ENCODE measurements at regions of chr1 and their contacts with region 1.

Region 1: GRCh38 chr1:24201941-24202440 is 14.9 kb upstream of the IFNLR1 start:
- DNase-seq: peak; percentile 98
- H3K4me3 Mint-ChIP-seq: no peak overlapping the region
- H3K27ac Mint-ChIP-seq: no peak overlapping the region
- H3K4me1 Mint-ChIP-seq: peaks cover 21% of the 10 kb centered on the region
- H3K27me3 Mint-ChIP-seq: no peaks in the 10 kb centered on the region
- CTCF ChIP-seq: peak; percentile 89

Region 2: GRCh38 chr1:23591460-23592208 is 610.4 kb before region 1 on chr1:
- CTCF ChIA-PET with region 1: no interaction called
- POLR2A ChIA-PET with region 1: no interaction called
- intact Hi-C with region 1: no loop called
- DNase-seq: no peak
- H3K4me3 Mint-ChIP-seq: no peak overlapping the region
- H3K27ac Mint-ChIP-seq: peak overlapping the region; percentile 94
- H3K4me1 Mint-ChIP-seq: peaks cover 74% of the 10 kb centered on the region
- H3K27me3 Mint-ChIP-seq: no peaks in the 10 kb centered on the region
- CTCF ChIP-seq: no peak

Region 3: GRCh38 chr1:24070821-24071393 is 131.1 kb before region 1 on chr1:
- CTCF ChIA-PET with region 1: interaction called, 21 read pairs
- POLR2A ChIA-PET with region 1: no interaction called
- intact Hi-C with region 1: loop called (anchors 2 kb)
- DNase-seq: peak; percentile 84
- H3K4me3 Mint-ChIP-seq: no peak overlapping the region
- H3K27ac Mint-ChIP-seq: no peak overlapping the region
- H3K4me1 Mint-ChIP-seq: peaks cover 3% of the 10 kb centered on the region
- H3K27me3 Mint-ChIP-seq: no peaks in the 10 kb centered on the region
- CTCF ChIP-seq: peak; percentile 88

Region 4: GRCh38 chr1:24186993-24187805 is 14.8 kb before region 1 on chr1 and contains the start of gene IFNLR1:
- CTCF ChIA-PET with region 1: interaction called, 35 read pairs
- POLR2A ChIA-PET with region 1: no interaction called
- intact Hi-C with region 1: no loop called
- DNase-seq: no peak
- H3K4me3 Mint-ChIP-seq: peak within 1 kb of the TSS; percentile 51
- H3K27ac Mint-ChIP-seq: no peak within 1 kb of the TSS
- H3K4me1 Mint-ChIP-seq: peaks cover 19% of the 10 kb centered on the region
- H3K27me3 Mint-ChIP-seq: no peaks in the 10 kb centered on the region
- CTCF ChIP-seq: no peak
- total RNA-seq, gene IFNLR1: 0.12 and 0.19 TPM in 2 replicates

Region 5: DNA sequence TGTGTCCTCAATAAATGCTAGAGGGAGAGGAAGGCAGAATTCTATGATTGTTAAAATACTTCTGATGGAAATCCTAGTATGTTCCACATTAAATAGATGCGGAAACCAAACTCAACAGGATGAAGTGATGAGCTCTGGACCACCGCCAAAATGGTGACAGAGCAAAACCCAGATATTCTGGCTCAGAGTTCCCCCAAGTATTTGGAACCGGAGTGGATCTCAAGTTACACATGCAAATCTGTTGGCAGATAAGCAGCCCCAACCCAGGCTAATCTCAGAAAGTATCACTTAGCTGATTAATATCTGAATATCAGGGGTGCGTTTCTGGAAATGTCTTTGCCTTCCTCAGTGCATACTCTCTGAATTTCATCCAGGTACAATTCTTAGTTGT is 99.8 kb after region 1 on chr1:
- CTCF ChIA-PET with region 1: interaction called, 27 read pairs
- POLR2A ChIA-PET with region 1: interaction called, 10 read pairs
- intact Hi-C with region 1: no loop called
- DNase-seq: no peak
- H3K4me3 Mint-ChIP-seq: no peak overlapping the region
- H3K27ac Mint-ChIP-seq: peak overlapping the region; percentile 46
- H3K4me1 Mint-ChIP-seq: peaks cover 12% of the 10 kb centered on the region
- H3K27me3 Mint-ChIP-seq: no peaks in the 10 kb centered on the region
- CTCF ChIP-seq: no peak

Region 6: GRCh38 chr1:24374891-24375786 is 173.1 kb after region 1 on chr1:
- CTCF ChIA-PET with region 1: interaction called, 6 read pairs
- POLR2A ChIA-PET with region 1: interaction called, 14 read pairs
- intact Hi-C with region 1: no loop called
- DNase-seq: peak; percentile 43
- H3K4me3 Mint-ChIP-seq: peak overlapping the region; percentile 56
- H3K27ac Mint-ChIP-seq: peak overlapping the region; percentile 99
- H3K4me1 Mint-ChIP-seq: peaks cover 35% of the 10 kb centered on the region
- H3K27me3 Mint-ChIP-seq: no peaks in the 10 kb centered on the region
- CTCF ChIP-seq: no peak

Region 7: GRCh38 chr1:24403806-24404205 is 201.8 kb after region 1 on chr1:
- CTCF ChIA-PET with region 1: interaction called, 16 read pairs
- POLR2A ChIA-PET with region 1: interaction called, 3 read pairs
- intact Hi-C with region 1: no loop called
- DNase-seq: no peak
- H3K4me3 Mint-ChIP-seq: no peak overlapping the region
- H3K27ac Mint-ChIP-seq: no peak overlapping the region
- H3K4me1 Mint-ChIP-seq: no peaks in the 10 kb centered on the region
- H3K27me3 Mint-ChIP-seq: no peaks in the 10 kb centered on the region
- CTCF ChIP-seq: no peak

Region 8: DNA sequence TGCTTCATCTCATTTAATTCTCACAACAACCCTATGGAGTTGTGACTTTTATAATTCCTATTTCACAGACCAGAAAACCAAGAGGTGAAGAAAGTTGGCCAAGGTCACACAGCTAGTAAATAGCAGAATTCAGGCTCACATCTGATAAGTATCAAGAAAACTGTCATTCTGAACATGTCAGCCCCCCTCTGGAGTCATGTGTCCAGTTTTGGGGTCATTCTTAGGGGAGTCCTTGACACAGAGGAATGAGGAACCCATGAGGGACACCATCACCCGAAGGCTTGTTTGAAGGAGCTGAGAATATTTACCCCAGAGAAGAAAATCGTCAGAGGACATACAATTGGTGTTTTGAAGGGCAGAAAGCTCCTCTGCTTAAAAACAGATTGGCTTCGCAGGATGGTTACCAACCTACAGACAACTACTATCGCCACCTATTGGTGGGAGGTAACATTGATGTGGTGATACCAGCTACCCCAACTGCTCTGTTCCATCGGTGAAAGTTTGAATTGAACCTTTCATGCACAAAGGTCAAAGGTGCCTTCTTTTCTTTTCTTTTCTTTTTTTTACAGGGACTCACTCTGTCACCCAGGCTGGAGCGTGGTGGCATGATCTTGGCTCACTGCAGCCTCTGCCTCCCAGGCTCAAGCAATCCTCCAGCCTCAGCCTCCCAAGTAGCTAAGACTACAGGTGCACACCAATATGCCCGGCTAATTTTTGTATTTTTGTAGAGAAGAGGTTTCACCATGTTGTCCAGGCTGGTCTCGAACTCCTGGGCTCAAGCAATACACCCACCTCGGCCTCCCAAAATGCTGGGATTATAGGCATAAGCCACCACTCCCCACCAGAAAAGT is 385.2 kb after region 1 on chr1:
- CTCF ChIA-PET with region 1: interaction called, 4 read pairs
- POLR2A ChIA-PET with region 1: no interaction called
- intact Hi-C with region 1: loop called (anchors 1 kb)
- DNase-seq: peak; percentile 72
- H3K4me3 Mint-ChIP-seq: no peak overlapping the region
- H3K27ac Mint-ChIP-seq: no peak overlapping the region
- H3K4me1 Mint-ChIP-seq: peaks cover 9% of the 10 kb centered on the region
- H3K27me3 Mint-ChIP-seq: no peaks in the 10 kb centered on the region
- CTCF ChIP-seq: peak; percentile 70

Measured in MCF 10A (cell line).